Heart right ventricle (tissue), 16 donors: ENCODE measurements at regions of chr7 and their contacts with region 1.

Region 1: DNA sequence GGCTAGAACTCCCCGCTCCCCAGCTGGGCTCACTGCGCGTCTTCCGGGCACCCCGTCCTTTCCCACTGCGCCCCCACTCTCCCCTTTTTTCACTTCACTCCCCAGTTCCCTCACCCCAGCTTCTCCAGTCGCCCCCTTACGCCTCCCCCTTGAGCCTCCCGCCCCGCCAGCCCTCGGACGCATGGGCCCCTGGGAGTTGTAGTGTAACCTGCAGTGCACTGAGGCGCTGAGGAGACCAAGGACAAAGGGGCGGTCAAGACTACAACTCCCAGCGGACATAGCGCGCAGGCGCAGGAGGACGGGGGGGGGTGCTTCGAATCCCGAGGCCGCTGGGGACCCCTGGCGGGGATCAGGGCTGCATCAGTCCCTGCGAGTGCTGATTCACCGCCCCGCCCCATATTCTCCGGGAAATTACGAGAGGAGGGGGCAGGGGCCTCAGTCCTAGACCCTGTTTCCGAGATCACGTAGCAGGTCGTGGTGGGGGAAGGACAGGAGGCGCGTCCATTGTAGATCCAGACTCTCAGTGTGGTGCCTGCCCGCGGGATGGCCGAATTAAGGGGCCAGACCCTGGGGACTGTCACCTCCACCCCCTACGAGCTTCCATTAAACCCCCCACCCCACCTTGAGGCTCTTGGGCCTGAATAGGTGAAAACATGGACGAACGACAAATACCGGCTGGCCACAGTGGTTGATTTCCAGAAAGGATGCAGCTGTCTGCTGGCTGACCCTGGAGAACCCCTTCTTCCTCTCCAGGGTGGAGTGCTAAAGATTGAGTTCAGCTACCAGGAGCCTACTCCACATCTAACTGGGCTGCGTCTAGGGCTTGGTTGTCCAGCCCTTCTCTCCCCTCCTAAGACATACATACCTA is 554 bp upstream of the YWHAG start:
- DNase-seq: peak; percentile 97 to 100
- ATAC-seq: peak; percentile 95 to 97 (median 96)
- H3K4me3 ChIP-seq: peak overlapping the region; percentile 82 to 100 (median 94)
- H3K27ac ChIP-seq: peak overlapping the region; percentile 88 to 100 (median 98)
- H3K4me1 ChIP-seq: peaks cover 12 to 59% (median 51%) of the 10 kb centered on the region in 9 donors
- H3K27me3 ChIP-seq: no peaks in the 10 kb centered on the region
- CTCF ChIP-seq: peak; percentile 51 to 93 (median 78)

Region 2: GRCh38 chr7:76201730-76202665 is 157.3 kb before region 1 on chr7 and contains the start of gene SRRM3:
- intact Hi-C with region 1: loop called in 1 of 10 experiments (anchors 5 kb)
- DNase-seq: peak; percentile 63 to 77
- ATAC-seq: peak; percentile 78 to 93 (median 86)
- H3K4me3 ChIP-seq: no peak within 1 kb of the TSS
- H3K27ac ChIP-seq: no peak within 1 kb of the TSS
- H3K4me1 ChIP-seq: peaks cover 0 to 4% (median 0%) of the 10 kb centered on the region in 9 donors
- H3K27me3 ChIP-seq: peaks cover 0 to 50% (median 29%) of the 10 kb centered on the region in 7 donors
- CTCF ChIP-seq: peak; percentile 26 to 75 (median 64)
- total RNA-seq, gene SRRM3: 1.0 to 15.9 (median 3.4) TPM

Region 3: DNA sequence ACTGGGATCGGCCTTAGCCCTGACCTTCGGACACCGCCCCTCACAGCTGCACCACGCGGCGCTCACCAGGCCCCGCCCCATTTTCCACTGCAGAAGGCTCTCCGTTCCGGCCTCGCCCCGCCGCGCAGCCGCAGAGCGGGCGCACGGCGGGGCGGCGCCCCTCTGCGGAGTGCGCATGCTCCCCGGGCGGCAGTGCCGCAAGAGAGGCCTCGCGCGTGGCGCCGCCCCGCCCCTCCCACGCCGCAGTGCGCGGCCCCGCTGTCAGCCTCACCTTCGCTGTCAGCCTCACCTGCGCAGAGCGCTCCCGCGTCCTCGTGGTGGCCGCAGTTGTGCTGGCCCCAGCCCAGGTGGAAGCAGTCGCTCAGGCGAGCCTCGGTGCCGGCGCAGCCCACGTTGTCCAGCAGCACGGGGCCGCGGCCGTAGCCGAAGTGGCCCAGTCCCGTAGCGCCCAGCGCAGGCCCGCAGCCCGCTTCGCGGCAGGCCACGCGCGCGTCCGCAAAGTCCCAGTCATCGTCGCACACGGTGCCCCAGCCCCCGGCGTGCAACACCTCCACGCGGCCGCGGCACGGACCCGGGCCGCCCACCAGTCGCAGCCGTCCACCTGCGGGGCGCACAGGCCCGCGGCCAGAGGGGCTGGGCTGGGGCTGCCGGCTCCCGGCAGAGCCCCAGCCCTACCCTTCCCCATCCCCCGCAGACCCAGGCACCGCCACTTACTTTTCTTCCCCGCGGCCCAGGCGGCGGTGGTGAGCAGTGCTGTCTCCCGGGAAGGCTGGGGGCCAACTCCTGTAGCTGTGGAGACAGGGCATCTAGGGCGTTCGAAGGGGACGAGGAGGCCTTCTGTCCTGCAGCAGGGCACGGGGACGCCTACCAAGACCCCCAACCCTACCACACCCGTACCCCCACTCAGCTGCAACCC is 34.0 kb after region 1 on chr7:
- intact Hi-C with region 1: loop called in 3 of 10 experiments (anchors 2 to 5 kb)
- DNase-seq: peak; percentile 96
- ATAC-seq: peak; percentile 92 to 96 (median 94)
- H3K4me3 ChIP-seq: peak overlapping the region; percentile 40 to 84 (median 72)
- H3K27ac ChIP-seq: peak overlapping the region; percentile 78 to 96 (median 94)
- H3K4me1 ChIP-seq: peaks cover 3 to 45% (median 17%) of the 10 kb centered on the region in 9 donors
- H3K27me3 ChIP-seq: no peaks in the 10 kb centered on the region
- CTCF ChIP-seq: peak in 3 of 9 donors; percentile 12 to 20 (median 13)